Sigmoid colon (tissue), 7 donors: ENCODE measurements at regions of chr2 and their contacts with region 1.

Region 1: GRCh38 chr2:190781604-190782198 is 98.9 kb upstream of the GLS start:
- DNase-seq: peak; percentile 71
- H3K4me3 ChIP-seq: no peak overlapping the region
- H3K27ac ChIP-seq: no peak overlapping the region
- H3K4me1 ChIP-seq: peaks cover 0 to 10% (median 0%) of the 10 kb centered on the region in 4 donors
- H3K27me3 ChIP-seq: no peaks in the 10 kb centered on the region
- CTCF ChIP-seq: peak; percentile 23 to 68 (median 54)
- EP300 ChIP-seq: no peak
- POLR2A ChIP-seq: no peak

Region 2: DNA sequence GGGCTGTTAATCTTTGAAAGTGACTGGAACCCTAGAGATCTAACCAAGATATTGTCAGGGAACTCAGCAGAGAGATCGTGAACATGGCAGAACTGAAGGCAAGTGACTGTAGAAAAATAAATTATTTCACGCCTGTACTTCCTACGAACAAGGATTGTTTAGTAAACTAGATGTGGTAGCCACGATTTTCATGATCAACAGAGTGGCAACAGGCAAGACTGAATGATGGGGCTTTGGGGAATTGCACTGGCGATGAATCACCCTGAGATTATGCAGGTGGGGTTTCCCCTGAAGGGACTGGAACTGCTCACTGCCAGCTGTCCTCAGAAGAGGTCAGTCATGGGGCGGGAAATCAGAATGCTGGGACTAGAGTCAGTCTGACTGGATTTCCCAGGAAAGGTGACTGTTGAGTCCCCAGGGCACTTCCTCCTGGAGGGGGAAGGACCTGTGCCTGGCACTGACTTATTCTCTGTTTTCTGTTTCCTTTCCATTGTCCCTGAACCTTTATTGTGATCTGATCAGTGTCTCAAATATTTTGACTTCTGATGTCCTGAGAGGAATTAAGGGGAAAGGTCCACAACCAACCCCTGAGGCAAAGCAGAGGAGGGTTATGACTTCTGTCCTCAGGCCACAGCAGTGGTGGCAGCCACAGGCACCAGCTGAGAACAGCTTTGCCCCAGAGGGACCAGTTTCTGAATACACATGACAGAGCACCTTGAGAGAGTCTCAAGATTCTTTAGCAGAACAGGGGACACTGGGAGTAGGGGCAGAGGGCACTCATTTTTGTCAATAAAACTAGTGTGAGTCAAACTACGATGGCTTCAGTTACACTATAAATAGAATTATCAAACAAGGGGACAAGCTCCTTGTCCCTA is 62.8 kb before region 1 on chr2:
- intact Hi-C with region 1: no loop called
- DNase-seq: no peak
- H3K4me3 ChIP-seq: no peak overlapping the region
- H3K27ac ChIP-seq: no peak overlapping the region
- H3K4me1 ChIP-seq: peaks cover 0 to 10% (median 8%) of the 10 kb centered on the region in 4 donors
- H3K27me3 ChIP-seq: no peaks in the 10 kb centered on the region
- CTCF ChIP-seq: no peak
- EP300 ChIP-seq: peak in 2 of 4 donors; percentile 15 to 21
- POLR2A ChIP-seq: no peak

Region 3: DNA sequence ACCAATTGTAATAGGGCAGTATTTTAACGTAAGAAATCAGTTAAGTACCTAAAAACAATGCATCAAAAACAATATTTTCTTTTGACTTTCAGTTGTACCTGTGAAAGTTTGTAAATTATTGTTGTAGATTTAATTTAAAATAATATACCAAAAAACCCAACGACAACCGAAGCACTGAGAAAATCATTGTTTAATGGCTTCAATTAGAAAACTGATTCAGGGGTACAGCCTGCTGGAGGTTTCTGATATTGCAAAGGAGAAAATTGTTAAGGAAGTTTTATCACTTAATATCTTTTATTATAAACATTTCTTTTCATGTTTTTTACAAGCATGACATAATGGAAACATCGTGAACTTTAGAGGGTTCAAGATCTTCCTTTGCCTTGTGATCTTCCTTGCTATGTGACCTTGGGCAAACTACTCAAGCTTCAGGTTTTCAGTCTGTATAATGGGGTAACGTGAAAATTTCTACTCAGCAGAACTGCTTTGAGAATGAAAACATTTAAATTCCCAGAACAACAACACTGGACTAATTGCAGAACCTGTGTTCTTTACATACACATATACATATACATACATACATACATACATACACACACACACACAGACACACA is 22.6 kb after region 1 on chr2:
- intact Hi-C with region 1: loop called (anchors 2 kb)
- DNase-seq: no peak
- H3K4me3 ChIP-seq: no peak overlapping the region
- H3K27ac ChIP-seq: no peak overlapping the region
- H3K4me1 ChIP-seq: peaks cover 0 to 3% (median 0%) of the 10 kb centered on the region in 4 donors
- H3K27me3 ChIP-seq: no peaks in the 10 kb centered on the region
- CTCF ChIP-seq: peak; percentile 30 to 63 (median 54)
- EP300 ChIP-seq: no peak
- POLR2A ChIP-seq: no peak

Region 4: GRCh38 chr2:191030521-191031154 is 248.9 kb after region 1 on chr2:
- intact Hi-C with region 1: loop called (anchors 2 kb)
- DNase-seq: no peak
- H3K4me3 ChIP-seq: no peak overlapping the region
- H3K27ac ChIP-seq: no peak overlapping the region
- H3K4me1 ChIP-seq: no peaks in the 10 kb centered on the region
- H3K27me3 ChIP-seq: no peaks in the 10 kb centered on the region
- CTCF ChIP-seq: peak; percentile 5 to 58 (median 52)
- EP300 ChIP-seq: no peak
- POLR2A ChIP-seq: no peak